ENCODE measurements at regions of chr11 and their contacts with region 1.

Region 1: DNA sequence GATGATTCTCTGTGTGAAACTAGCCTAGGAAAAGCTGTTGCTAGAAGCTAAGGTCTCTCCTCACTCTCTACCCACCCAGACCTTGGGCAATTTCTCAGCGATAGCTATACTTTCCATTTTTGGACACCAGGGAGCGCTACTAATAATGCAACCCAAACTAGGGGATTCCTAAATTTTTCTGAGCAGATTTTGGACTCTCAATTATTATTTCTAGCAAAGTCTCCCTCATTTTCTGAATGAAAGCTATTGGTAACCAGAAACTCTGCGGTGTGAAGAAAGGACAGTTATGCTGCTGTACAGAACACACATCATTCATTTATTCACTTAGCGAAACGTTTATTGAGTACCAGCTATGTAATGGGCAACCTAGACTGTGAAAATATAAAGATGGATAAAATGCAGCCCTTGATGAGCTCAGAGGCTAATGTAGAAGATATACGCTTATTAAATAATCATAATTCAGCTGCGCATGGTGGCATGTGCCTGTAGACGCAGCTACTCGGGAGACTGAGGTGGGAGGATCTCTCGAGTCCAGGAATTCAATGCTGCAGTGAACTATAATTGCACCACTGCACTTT is 6.1 kb upstream of the STIM1 start:
- DNase-seq: peak; percentile 60
- ATAC-seq: peak; percentile 60
- H3K4me3 Mint-ChIP-seq: no peak overlapping the region
- H3K27ac Mint-ChIP-seq: peak overlapping the region; percentile 1
- H3K4me1 Mint-ChIP-seq: peaks cover 43% of the 10 kb centered on the region
- H3K27me3 Mint-ChIP-seq: no peaks in the 10 kb centered on the region

Region 2: DNA sequence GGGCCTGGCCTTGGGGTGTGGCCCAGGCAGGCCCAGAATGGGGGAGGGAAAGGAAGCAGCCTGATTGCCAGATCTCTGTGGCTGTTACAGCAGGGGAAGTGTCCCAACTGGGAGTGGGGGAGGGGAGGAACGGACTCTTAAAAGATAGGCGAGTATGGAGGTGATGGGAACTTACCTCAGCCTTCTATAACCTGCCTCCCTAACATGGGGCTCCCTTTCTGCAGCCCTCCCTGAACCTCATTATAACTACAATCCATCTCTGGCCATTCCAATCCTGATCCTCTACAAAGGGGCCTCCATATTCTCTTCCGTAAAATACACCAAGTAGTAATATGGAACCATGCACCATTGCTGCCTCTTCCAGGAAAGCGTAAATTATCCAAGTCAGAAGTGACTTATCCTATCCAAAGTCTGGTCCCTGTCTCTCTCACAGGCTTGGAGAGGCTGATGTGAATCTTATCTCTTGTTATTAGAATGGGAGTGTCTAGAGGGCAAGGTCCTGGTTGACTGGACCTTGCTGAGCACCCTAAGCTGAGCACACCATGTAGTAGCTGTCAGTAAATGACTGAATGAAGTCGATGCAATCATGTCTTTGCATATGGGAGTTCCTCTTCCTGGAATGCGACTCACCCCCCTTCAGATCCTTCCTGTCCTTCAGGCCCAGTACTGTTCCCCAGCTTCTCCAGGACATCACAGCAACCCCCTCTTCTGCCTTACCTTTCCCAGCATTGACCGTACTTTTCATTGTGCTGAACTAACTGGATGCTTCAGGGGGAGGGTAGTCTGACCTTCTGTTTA is 14.5 kb before region 1 on chr11:
- CTCF ChIA-PET with region 1: interaction called, 218 read pairs
- POLR2A ChIA-PET with region 1: interaction called, 69 read pairs
- intact Hi-C with region 1: no loop called
- DNase-seq: peak; percentile 32
- ATAC-seq: no peak
- H3K4me3 Mint-ChIP-seq: peak overlapping the region; percentile 93
- H3K27ac Mint-ChIP-seq: peak overlapping the region; percentile 92
- H3K4me1 Mint-ChIP-seq: peaks cover 87% of the 10 kb centered on the region
- H3K27me3 Mint-ChIP-seq: no peaks in the 10 kb centered on the region

Region 3: GRCh38 chr11:3947061-3947460 is 97.7 kb after region 1 on chr11:
- CTCF ChIA-PET with region 1: interaction called, 15 read pairs
- POLR2A ChIA-PET with region 1: no interaction called
- intact Hi-C with region 1: no loop called
- DNase-seq: peak; percentile 60
- ATAC-seq: peak; percentile 85
- H3K4me3 Mint-ChIP-seq: peak overlapping the region; percentile 34
- H3K27ac Mint-ChIP-seq: peak overlapping the region; percentile 88
- H3K4me1 Mint-ChIP-seq: peaks cover 94% of the 10 kb centered on the region
- H3K27me3 Mint-ChIP-seq: no peaks in the 10 kb centered on the region

Region 4: DNA sequence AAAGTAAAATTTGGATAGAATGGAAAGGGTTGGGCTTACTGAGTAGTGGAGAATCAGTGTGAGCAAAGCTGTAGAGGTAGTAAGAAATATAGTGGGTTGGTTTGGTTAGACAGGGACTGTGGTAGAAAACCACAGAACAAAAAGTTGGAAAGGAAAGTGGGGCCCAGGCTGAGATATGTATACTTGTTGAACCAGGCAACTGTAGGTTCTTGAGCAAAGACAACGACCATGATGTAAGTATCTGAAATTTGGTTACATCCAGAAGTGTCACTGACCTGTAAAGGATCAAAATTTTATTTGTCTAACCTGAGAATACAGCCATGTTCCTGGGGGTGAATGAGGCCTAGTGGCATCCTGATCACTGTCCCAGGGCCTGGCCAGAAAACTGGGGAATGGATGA is 120.2 kb after region 1 on chr11:
- CTCF ChIA-PET with region 1: interaction called, 10 read pairs
- POLR2A ChIA-PET with region 1: interaction called, 9 read pairs
- intact Hi-C with region 1: no loop called
- DNase-seq: peak; percentile 59
- ATAC-seq: peak; percentile 77
- H3K4me3 Mint-ChIP-seq: peak overlapping the region; percentile 26
- H3K27ac Mint-ChIP-seq: peak overlapping the region; percentile 92
- H3K4me1 Mint-ChIP-seq: peaks cover 77% of the 10 kb centered on the region
- H3K27me3 Mint-ChIP-seq: no peaks in the 10 kb centered on the region

Region 5: DNA sequence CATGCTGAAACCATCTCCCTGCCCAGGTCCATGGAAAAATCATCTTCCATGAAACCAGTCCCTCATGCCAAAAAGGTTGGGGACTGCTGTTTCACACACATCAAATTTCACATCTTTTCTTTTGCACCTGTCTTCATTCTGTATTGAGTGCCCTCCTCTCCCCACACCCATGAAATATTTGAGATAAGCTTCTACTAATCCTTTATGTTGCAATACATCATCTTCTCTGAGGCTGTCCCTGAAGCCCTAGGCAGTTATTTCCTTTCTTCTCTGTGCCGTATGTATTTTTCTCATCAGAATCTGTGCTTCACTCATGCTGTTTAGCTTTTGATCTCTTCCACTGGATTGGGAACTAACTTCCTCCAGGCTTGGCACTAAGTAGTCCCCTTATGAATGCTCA is 205.3 kb after region 1 on chr11:
- CTCF ChIA-PET with region 1: interaction called, 18 read pairs
- POLR2A ChIA-PET with region 1: interaction called, 22 read pairs
- intact Hi-C with region 1: loop called in 1 of 2 experiments (anchors 1 kb)
- DNase-seq: no peak
- ATAC-seq: no peak
- H3K4me3 Mint-ChIP-seq: no peak overlapping the region
- H3K27ac Mint-ChIP-seq: peak overlapping the region; percentile 1
- H3K4me1 Mint-ChIP-seq: peaks cover 23% of the 10 kb centered on the region
- H3K27me3 Mint-ChIP-seq: no peaks in the 10 kb centered on the region

Region 6: GRCh38 chr11:4087551-4087950 is 238.2 kb after region 1 on chr11:
- CTCF ChIA-PET with region 1: interaction called, 11 read pairs
- POLR2A ChIA-PET with region 1: no interaction called
- intact Hi-C with region 1: no loop called
- DNase-seq: no peak
- ATAC-seq: no peak
- H3K4me3 Mint-ChIP-seq: no peak overlapping the region
- H3K27ac Mint-ChIP-seq: peak overlapping the region; percentile 64
- H3K4me1 Mint-ChIP-seq: peaks cover 48% of the 10 kb centered on the region
- H3K27me3 Mint-ChIP-seq: no peaks in the 10 kb centered on the region

Region 7: GRCh38 chr11:4156571-4156970 is 307.2 kb after region 1 on chr11:
- CTCF ChIA-PET with region 1: no interaction called
- POLR2A ChIA-PET with region 1: no interaction called
- intact Hi-C with region 1: no loop called
- DNase-seq: no peak
- ATAC-seq: no peak
- H3K4me3 Mint-ChIP-seq: no peak overlapping the region
- H3K27ac Mint-ChIP-seq: no peak overlapping the region
- H3K4me1 Mint-ChIP-seq: no peaks in the 10 kb centered on the region
- H3K27me3 Mint-ChIP-seq: no peaks in the 10 kb centered on the region

Measured in activated CD4-positive, alpha-beta T cell treated with anti-CD3 and anti-CD28 coated beads for 36 hours (primary cell).